Adrenal gland (tissue), 19 donors: ENCODE measurements at regions of chr16 and their contacts with region 1.

Region 1: GRCh38 chr16:48385272-48386150 is at the start of gene SIAH1:
- DNase-seq: peak; percentile 76 to 88 (median 82)
- H3K4me3 ChIP-seq: peak within 1 kb of the TSS; percentile 36 to 98 (median 92)
- H3K27ac ChIP-seq: peak within 1 kb of the TSS; percentile 48 to 100 (median 99)
- H3K4me1 ChIP-seq: peaks cover 32 to 35% of the 10 kb centered on the region in 2 donors
- H3K27me3 ChIP-seq: no peaks in the 10 kb centered on the region
- CTCF ChIP-seq: no peak
- POLR2A ChIP-seq: peak; percentile 70 to 88
- total RNA-seq, gene SIAH1: 11.8 to 27.5 (median 18.2) TPM

Region 2: GRCh38 chr16:48365581-48366164 is 19.8 kb before region 1 on chr16:
- intact Hi-C with region 1: loop called in 1 of 2 experiments (anchors 2 kb)
- DNase-seq: peak; percentile 89 to 95 (median 91)
- H3K4me3 ChIP-seq: peak overlapping the region in 3 of 4 donors; percentile 41 to 78 (median 61)
- H3K27ac ChIP-seq: peak overlapping the region; percentile 78 to 92 (median 90)
- H3K4me1 ChIP-seq: peaks cover 18 to 29% of the 10 kb centered on the region in 2 donors
- H3K27me3 ChIP-seq: no peaks in the 10 kb centered on the region
- CTCF ChIP-seq: no peak
- POLR2A ChIP-seq: peak; percentile 71 to 96

Region 3: DNA sequence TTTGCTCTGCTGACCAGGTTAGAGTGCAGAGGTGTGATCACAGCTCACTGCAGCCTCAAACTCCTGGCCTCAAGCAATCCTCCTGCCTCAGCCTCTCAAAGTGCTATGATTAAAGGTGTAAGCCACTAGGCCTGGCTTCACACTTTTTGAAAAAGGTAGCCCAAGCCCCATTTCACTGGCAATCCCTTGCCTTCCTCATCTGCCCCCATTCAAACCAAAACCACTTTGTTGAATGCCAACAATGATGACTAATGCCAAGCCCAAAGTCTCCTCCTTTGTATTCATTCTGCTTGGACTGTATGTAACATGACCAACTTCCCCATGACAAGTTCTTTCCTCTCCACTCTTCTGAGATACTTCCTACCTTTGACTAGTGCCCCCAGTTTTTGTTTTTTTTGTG is 191.4 kb after region 1 on chr16:
- intact Hi-C with region 1: no loop called
- DNase-seq: no peak
- H3K4me3 ChIP-seq: no peak overlapping the region
- H3K27ac ChIP-seq: no peak overlapping the region
- H3K4me1 ChIP-seq: peaks cover 15 to 25% of the 10 kb centered on the region in 2 donors
- H3K27me3 ChIP-seq: no peaks in the 10 kb centered on the region
- CTCF ChIP-seq: no peak
- POLR2A ChIP-seq: no peak